ENCODE measurements at regions of chr5 and their contacts with region 1.

Region 1: GRCh38 chr5:142888469-142889085 is 118.4 kb downstream of the ARHGAP26 start:
- DNase-seq: peak in 4 of 14 experiments; percentile 28 to 53 (median 42)
- ATAC-seq: peak; percentile 37
- H3K4me3 ChIP-seq: no peak overlapping the region
- H3K4me3 Mint-ChIP-seq: no peak overlapping the region
- H3K27ac ChIP-seq: no peak overlapping the region
- H3K27ac Mint-ChIP-seq: no peak overlapping the region
- H3K4me1 ChIP-seq: no peaks in the 10 kb centered on the region
- H3K4me1 Mint-ChIP-seq: no peaks in the 10 kb centered on the region
- H3K27me3 ChIP-seq: no peaks in the 10 kb centered on the region
- H3K27me3 Mint-ChIP-seq: no peaks in the 10 kb centered on the region
- CTCF ChIP-seq: peak; percentile 84

Region 2: DNA sequence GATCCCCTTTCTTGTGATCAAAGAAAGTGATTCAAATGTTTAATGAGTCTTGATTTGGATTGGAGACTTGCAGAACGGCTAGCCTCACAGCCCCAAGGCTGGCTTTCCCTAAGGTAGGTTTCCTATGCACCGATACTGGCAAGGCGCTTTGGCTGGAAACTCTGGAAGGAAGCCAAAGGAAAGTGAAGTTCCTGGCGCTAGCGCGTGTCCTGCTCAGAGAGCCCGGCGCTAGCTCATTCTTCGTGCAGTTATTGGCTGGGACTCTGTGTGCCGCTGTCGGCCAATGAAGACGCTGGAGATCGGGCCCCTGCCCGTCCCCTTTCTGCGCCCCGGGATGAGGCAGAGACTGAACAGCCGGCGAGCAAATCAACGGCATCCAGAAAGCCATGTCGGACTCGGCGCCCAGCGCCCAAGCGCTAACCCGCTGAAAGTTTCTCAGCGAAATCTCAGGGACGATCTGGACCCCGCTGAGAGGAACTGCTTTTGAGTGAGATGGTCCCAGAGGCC is 1412.9 kb before region 1 on chr5 and contains the start of gene PCDHGC3:
- CTCF ChIA-PET with region 1: no interaction called
- POLR2A ChIA-PET with region 1: no interaction called
- intact Hi-C with region 1: no loop called
- DNase-seq: peak in 8 of 14 experiments; percentile 11 to 50 (median 26)
- ATAC-seq: peak; percentile 54
- H3K4me3 ChIP-seq: peak within 1 kb of the TSS; percentile 52
- H3K4me3 Mint-ChIP-seq: peak within 1 kb of the TSS; percentile 78
- H3K27ac ChIP-seq: no peak within 1 kb of the TSS
- H3K27ac Mint-ChIP-seq: no peak within 1 kb of the TSS
- H3K4me1 ChIP-seq: peaks cover 27% of the 10 kb centered on the region
- H3K4me1 Mint-ChIP-seq: peaks cover 36% of the 10 kb centered on the region
- H3K27me3 ChIP-seq: peaks cover 46 to 63% of the 10 kb centered on the region in 2 experiments
- H3K27me3 Mint-ChIP-seq: peaks cover 69% of the 10 kb centered on the region
- CTCF ChIP-seq: no peak
- total RNA-seq, gene PCDHGC3: not detected

Region 3: GRCh38 chr5:141992349-141992963 is 896.1 kb before region 1 on chr5:
- CTCF ChIA-PET with region 1: no interaction called
- POLR2A ChIA-PET with region 1: no interaction called
- intact Hi-C with region 1: loop called in 1 of 2 experiments (anchors 10 kb)
- DNase-seq: peak; percentile 61 to 91 (median 78)
- ATAC-seq: peak; percentile 88
- H3K4me3 ChIP-seq: no peak overlapping the region
- H3K4me3 Mint-ChIP-seq: no peak overlapping the region
- H3K27ac ChIP-seq: no peak overlapping the region
- H3K27ac Mint-ChIP-seq: no peak overlapping the region
- H3K4me1 ChIP-seq: no peaks in the 10 kb centered on the region
- H3K4me1 Mint-ChIP-seq: peaks cover 6% of the 10 kb centered on the region
- H3K27me3 ChIP-seq: no peaks in the 10 kb centered on the region
- H3K27me3 Mint-ChIP-seq: no peaks in the 10 kb centered on the region
- CTCF ChIP-seq: peak; percentile 93

Region 4: GRCh38 chr5:142611154-142611553 is 277.4 kb before region 1 on chr5:
- CTCF ChIA-PET with region 1: no interaction called
- POLR2A ChIA-PET with region 1: no interaction called
- intact Hi-C with region 1: loop called in 1 of 2 experiments (anchors 5 kb)
- DNase-seq: peak; percentile 34 to 70 (median 56)
- ATAC-seq: peak; percentile 94
- H3K4me3 ChIP-seq: no peak overlapping the region
- H3K4me3 Mint-ChIP-seq: no peak overlapping the region
- H3K27ac ChIP-seq: no peak overlapping the region
- H3K27ac Mint-ChIP-seq: no peak overlapping the region
- H3K4me1 ChIP-seq: no peaks in the 10 kb centered on the region
- H3K4me1 Mint-ChIP-seq: no peaks in the 10 kb centered on the region
- H3K27me3 ChIP-seq: peaks cover 0 to 3% of the 10 kb centered on the region in 2 experiments
- H3K27me3 Mint-ChIP-seq: peaks cover 34% of the 10 kb centered on the region
- CTCF ChIP-seq: peak; percentile 77

Region 5: DNA sequence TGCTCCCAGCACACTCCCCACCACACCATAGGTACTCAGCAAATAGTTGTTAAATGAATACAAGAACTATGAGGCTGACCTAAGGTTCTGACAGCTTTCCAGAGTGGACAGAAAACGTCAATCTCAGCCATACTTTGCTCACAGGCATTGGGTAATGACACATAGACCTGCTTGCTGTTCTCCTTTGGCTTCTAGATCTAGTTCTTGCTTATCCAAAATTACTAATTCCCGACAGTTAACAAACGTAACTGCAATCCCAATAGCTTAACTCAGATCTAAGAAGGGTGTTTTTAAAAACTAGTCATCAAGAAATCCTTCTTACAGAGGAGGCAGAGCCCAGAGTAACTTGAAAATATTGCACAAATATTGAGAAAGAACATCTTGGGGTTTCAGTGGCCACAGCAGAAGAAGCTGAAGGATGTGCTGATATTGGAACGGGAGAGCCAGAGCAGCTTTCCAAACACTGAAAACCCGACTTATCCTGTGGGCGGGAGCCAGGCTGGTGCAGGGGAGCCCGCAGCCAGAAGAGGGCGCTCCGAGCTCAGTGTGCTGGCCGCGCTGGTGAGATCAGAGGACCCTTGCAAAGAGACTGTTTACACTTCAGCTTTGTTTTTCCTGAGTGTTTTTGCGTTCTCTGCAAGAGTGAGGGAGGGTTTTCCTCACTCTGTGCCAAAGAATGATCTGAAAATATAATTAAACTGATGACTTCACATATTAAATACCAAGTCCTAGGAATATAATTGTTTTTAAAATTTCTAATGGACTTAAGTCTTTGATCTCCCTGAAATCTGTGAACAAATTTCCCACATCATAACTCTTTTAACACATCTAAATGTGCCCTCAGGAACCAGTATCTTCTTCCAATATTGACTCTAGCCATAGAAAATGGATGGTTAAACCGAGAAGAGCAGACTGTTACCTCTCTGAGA is 233.0 kb before region 1 on chr5:
- CTCF ChIA-PET with region 1: interaction called, 4 read pairs
- POLR2A ChIA-PET with region 1: no interaction called
- intact Hi-C with region 1: loop called in 1 of 2 experiments (anchors 1 kb)
- DNase-seq: peak; percentile 43 to 78 (median 60)
- ATAC-seq: peak; percentile 87
- H3K4me3 ChIP-seq: no peak overlapping the region
- H3K4me3 Mint-ChIP-seq: no peak overlapping the region
- H3K27ac ChIP-seq: no peak overlapping the region
- H3K27ac Mint-ChIP-seq: no peak overlapping the region
- H3K4me1 ChIP-seq: no peaks in the 10 kb centered on the region
- H3K4me1 Mint-ChIP-seq: peaks cover 8% of the 10 kb centered on the region
- H3K27me3 ChIP-seq: peaks cover 3 to 6% of the 10 kb centered on the region in 2 experiments
- H3K27me3 Mint-ChIP-seq: peaks cover 16% of the 10 kb centered on the region
- CTCF ChIP-seq: peak; percentile 93

Region 6: GRCh38 chr5:142807372-142807911 is 81.1 kb before region 1 on chr5:
- CTCF ChIA-PET with region 1: no interaction called
- POLR2A ChIA-PET with region 1: no interaction called
- intact Hi-C with region 1: no loop called
- DNase-seq: peak in 2 of 14 experiments; percentile 44 to 47
- ATAC-seq: no peak
- H3K4me3 ChIP-seq: no peak overlapping the region
- H3K4me3 Mint-ChIP-seq: no peak overlapping the region
- H3K27ac ChIP-seq: no peak overlapping the region
- H3K27ac Mint-ChIP-seq: no peak overlapping the region
- H3K4me1 ChIP-seq: peaks cover 2% of the 10 kb centered on the region
- H3K4me1 Mint-ChIP-seq: peaks cover 34% of the 10 kb centered on the region
- H3K27me3 ChIP-seq: no peaks in the 10 kb centered on the region
- H3K27me3 Mint-ChIP-seq: no peaks in the 10 kb centered on the region
- CTCF ChIP-seq: no peak

Region 7: GRCh38 chr5:143898916-143899591 is 1010.5 kb after region 1 on chr5:
- CTCF ChIA-PET with region 1: no interaction called
- POLR2A ChIA-PET with region 1: no interaction called
- intact Hi-C with region 1: no loop called
- DNase-seq: peak in 3 of 14 experiments; percentile 9 to 16 (median 11)
- ATAC-seq: no peak
- H3K4me3 ChIP-seq: no peak overlapping the region
- H3K4me3 Mint-ChIP-seq: peak overlapping the region; percentile 5
- H3K27ac ChIP-seq: peak overlapping the region; percentile 23 to 30
- H3K27ac Mint-ChIP-seq: peak overlapping the region; percentile 4
- H3K4me1 ChIP-seq: peaks cover 9% of the 10 kb centered on the region
- H3K4me1 Mint-ChIP-seq: peaks cover 34% of the 10 kb centered on the region
- H3K27me3 ChIP-seq: no peaks in the 10 kb centered on the region
- H3K27me3 Mint-ChIP-seq: no peaks in the 10 kb centered on the region
- CTCF ChIP-seq: no peak